CD8-positive, alpha-beta memory T cell (primary cell): ENCODE measurements at regions of chr9 and their contacts with region 1.

Region 1: GRCh38 chr9:35771534-35771933 is 17.5 kb upstream of the MSMP start:
- DNase-seq: no peak
- H3K4me3 ChIP-seq: no peak overlapping the region
- H3K4me3 Mint-ChIP-seq: no peak overlapping the region
- H3K27ac ChIP-seq: no peak overlapping the region
- H3K27ac Mint-ChIP-seq: no peak overlapping the region
- H3K4me1 ChIP-seq: no peaks in the 10 kb centered on the region
- H3K4me1 Mint-ChIP-seq: peaks cover 7 to 10% (median 8%) of the 10 kb centered on the region in 3 donors
- H3K27me3 ChIP-seq: no peaks in the 10 kb centered on the region
- H3K27me3 Mint-ChIP-seq: no peaks in the 10 kb centered on the region

Region 2: DNA sequence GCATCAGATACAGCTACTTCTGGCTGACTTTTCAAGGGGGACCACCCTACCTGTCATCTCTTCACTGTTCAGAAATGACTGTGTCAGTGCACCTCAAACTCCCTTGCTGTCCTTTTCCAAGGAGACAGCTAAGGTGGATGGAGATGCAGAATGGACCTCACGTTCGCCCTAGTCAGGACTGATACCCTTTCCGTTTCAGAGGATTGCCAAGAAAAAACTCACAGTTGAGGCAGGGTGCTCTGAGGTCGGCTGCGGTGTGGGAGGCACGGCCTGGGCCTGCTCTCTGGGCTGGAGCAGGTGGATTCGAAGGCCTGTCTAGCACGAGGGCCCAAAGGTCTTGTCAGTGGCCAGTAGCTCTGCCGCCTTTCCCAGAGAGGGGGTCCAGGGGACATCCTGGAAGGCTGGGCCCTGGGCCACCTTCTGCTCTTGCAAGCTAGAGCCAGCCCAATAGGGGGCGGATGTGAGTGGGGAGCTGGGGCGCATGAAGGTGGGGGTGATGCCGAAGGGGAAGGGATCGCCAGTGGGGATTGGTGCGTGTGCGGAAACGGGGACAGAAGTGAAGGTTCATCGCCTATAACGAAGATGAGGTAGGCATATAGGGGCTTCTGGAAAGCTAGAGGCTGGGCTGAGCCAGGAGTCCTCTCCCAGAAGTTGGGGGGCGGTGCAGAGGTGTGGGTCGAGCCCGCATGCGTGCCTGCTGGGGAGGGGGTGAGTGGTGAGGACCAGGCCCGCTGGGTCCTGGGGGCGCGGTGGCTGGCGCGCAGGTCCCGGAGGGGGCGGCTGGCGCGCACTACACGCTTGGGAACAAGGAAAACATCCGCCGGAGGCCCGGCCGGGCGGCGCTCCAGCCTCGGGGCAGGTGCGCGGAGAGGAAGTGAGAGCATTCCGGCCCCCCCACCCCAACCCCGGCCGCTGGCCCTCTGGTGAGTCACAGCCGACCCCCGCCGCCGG is 15.0 kb before region 1 on chr9:
- CTCF ChIA-PET with region 1: interaction called, 11 read pairs
- POLR2A ChIA-PET with region 1: no interaction called
- DNase-seq: peak; percentile 65 to 86 (median 67)
- H3K4me3 ChIP-seq: peak overlapping the region; percentile 92
- H3K4me3 Mint-ChIP-seq: peak overlapping the region; percentile 92 to 100 (median 96)
- H3K27ac ChIP-seq: peak overlapping the region; percentile 76
- H3K27ac Mint-ChIP-seq: peak overlapping the region; percentile 92 to 99 (median 96)
- H3K4me1 ChIP-seq: peaks cover 25% of the 10 kb centered on the region
- H3K4me1 Mint-ChIP-seq: peaks cover 43 to 63% (median 51%) of the 10 kb centered on the region in 3 donors
- H3K27me3 ChIP-seq: no peaks in the 10 kb centered on the region
- H3K27me3 Mint-ChIP-seq: no peaks in the 10 kb centered on the region

Region 3: GRCh38 chr9:35835216-35835632 is 63.7 kb after region 1 on chr9:
- CTCF ChIA-PET with region 1: no interaction called
- POLR2A ChIA-PET with region 1: no interaction called
- DNase-seq: no peak
- H3K4me3 ChIP-seq: no peak overlapping the region
- H3K4me3 Mint-ChIP-seq: no peak overlapping the region
- H3K27ac ChIP-seq: no peak overlapping the region
- H3K27ac Mint-ChIP-seq: no peak overlapping the region
- H3K4me1 ChIP-seq: no peaks in the 10 kb centered on the region
- H3K4me1 Mint-ChIP-seq: peaks cover 1 to 17% (median 1%) of the 10 kb centered on the region in 3 donors
- H3K27me3 ChIP-seq: no peaks in the 10 kb centered on the region
- H3K27me3 Mint-ChIP-seq: no peaks in the 10 kb centered on the region